Left cardiac atrium (tissue), 4 donors: ENCODE measurements at regions of chr1 and their contacts with region 1.

Region 1: GRCh38 chr1:15994590-15995351 is 9.3 kb upstream of the SRARP start:
- DNase-seq: peak; percentile 81
- ATAC-seq: peak; percentile 84 to 89

Region 2: GRCh38 chr1:15489052-15489736 is 505.6 kb before region 1 on chr1:
- intact Hi-C with region 1: no loop called
- DNase-seq: no peak
- ATAC-seq: peak; percentile 20 to 21

Region 3: GRCh38 chr1:15799004-15799936 is 195.5 kb before region 1 on chr1:
- intact Hi-C with region 1: loop called in 1 of 2 experiments (anchors 5 kb)
- DNase-seq: peak; percentile 80
- ATAC-seq: peak; percentile 84 to 89

Region 4: DNA sequence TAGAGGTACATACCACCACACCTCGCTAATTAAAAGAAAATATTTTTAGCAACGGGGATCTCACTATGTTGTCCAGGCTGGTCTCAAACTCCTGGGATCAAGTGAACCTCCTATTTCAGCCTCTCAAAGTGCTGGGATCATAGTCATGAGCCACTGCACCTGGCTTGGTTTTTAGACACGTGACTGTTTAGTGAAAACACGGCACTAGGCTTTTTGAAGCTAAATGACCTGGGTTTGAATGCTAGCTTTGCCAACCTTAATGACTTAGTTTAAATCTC is 185.0 kb before region 1 on chr1:
- intact Hi-C with region 1: loop called in 1 of 2 experiments (anchors 5 kb)
- DNase-seq: no peak
- ATAC-seq: no peak